Activated CD4-positive, alpha-beta memory T cell treated with anti-CD3 and anti-CD28 coated beads for 36 hours (primary cell): ENCODE measurements at regions of chr2 and their contacts with region 1.

Region 1: DNA sequence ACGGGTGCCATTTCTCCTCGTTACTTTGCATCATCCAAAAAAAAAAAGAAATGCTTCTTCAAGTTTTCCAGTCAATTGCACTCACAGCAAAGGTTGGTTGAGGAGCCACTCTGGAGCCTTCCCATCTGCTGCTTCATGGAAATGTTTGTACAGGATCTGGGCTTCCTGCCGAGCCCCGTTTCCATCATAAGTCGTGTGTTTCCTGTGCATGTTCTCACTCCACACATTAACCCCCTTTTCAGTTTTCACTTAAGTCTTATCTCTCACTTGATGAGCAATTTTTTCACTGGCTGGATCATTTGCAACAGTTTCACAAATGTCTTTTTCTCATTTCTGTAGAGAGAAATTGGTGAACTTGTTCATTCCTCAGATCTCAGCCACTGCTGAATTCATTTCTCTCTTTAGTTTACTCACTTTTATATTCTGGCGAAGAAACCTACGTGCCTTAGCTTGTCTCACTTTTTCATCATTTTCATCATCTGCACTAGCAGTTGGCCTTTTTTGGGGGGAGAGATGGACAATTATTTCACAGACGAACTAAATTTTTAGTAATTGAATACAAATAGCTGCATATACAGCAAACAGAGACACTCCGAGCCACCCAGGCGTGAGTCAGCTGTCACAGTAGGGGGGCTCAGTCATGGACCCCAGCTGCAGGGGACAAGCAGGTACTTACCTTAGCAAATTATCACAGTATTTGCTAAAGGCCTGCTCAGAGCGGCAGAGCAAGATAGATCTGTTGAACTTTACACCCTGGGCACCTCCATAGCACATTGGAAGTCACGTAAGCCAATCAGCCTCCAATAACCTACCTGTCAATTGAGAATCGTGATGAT is 750.8 kb upstream of the ID2 start:
- DNase-seq: peak; percentile 62
- H3K4me3 Mint-ChIP-seq: peak overlapping the region; percentile 1
- H3K27ac Mint-ChIP-seq: peak overlapping the region; percentile 88
- H3K4me1 Mint-ChIP-seq: peaks cover 31% of the 10 kb centered on the region
- H3K27me3 Mint-ChIP-seq: peaks cover 3% of the 10 kb centered on the region

Region 2: GRCh38 chr2:7692657-7693161 is 238.3 kb before region 1 on chr2:
- CTCF ChIA-PET with region 1: no interaction called
- POLR2A ChIA-PET with region 1: no interaction called
- intact Hi-C with region 1: loop called (anchors 10 kb)
- DNase-seq: no peak
- H3K4me3 Mint-ChIP-seq: peak overlapping the region; percentile 6
- H3K27ac Mint-ChIP-seq: no peak overlapping the region
- H3K4me1 Mint-ChIP-seq: peaks cover 37% of the 10 kb centered on the region
- H3K27me3 Mint-ChIP-seq: peaks cover 3% of the 10 kb centered on the region

Region 3: GRCh38 chr2:7773362-7774360 is 157.4 kb before region 1 on chr2:
- CTCF ChIA-PET with region 1: no interaction called
- POLR2A ChIA-PET with region 1: no interaction called
- intact Hi-C with region 1: loop called (anchors 1 kb)
- DNase-seq: peak; percentile 65
- H3K4me3 Mint-ChIP-seq: no peak overlapping the region
- H3K27ac Mint-ChIP-seq: peak overlapping the region; percentile 66
- H3K4me1 Mint-ChIP-seq: peaks cover 33% of the 10 kb centered on the region
- H3K27me3 Mint-ChIP-seq: peaks cover 12% of the 10 kb centered on the region

Region 4: GRCh38 chr2:7857904-7858303 is 73.1 kb before region 1 on chr2:
- CTCF ChIA-PET with region 1: no interaction called
- POLR2A ChIA-PET with region 1: no interaction called
- intact Hi-C with region 1: no loop called
- DNase-seq: no peak
- H3K4me3 Mint-ChIP-seq: no peak overlapping the region
- H3K27ac Mint-ChIP-seq: no peak overlapping the region
- H3K4me1 Mint-ChIP-seq: peaks cover 8% of the 10 kb centered on the region
- H3K27me3 Mint-ChIP-seq: peaks cover 3% of the 10 kb centered on the region

Region 5: DNA sequence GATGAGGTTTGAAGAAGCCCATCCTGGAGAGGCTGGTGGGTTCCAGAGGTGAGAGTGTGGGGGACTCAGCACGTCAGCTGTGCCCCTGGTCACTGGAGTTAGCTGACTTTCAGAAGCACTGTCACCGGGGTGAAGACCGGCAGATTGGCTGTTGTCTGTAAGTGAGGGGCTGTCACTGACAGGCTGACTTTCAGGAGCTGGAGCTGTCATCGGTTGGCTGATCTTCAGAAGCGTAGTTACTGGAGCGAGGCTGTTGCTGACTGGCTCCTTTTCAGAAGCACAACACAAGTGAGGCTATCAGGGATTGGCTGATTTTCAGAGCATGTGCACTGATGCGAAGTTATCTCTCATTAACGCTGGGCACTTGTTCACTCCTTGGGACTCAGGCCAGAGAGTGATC is 12.4 kb after region 1 on chr2:
- CTCF ChIA-PET with region 1: interaction called, 3 read pairs
- POLR2A ChIA-PET with region 1: no interaction called
- intact Hi-C with region 1: loop called (anchors 1 kb)
- DNase-seq: no peak
- H3K4me3 Mint-ChIP-seq: no peak overlapping the region
- H3K27ac Mint-ChIP-seq: no peak overlapping the region
- H3K4me1 Mint-ChIP-seq: peaks cover 21% of the 10 kb centered on the region
- H3K27me3 Mint-ChIP-seq: no peaks in the 10 kb centered on the region

Region 6: GRCh38 chr2:8234757-8235374 is 303.8 kb after region 1 on chr2:
- CTCF ChIA-PET with region 1: no interaction called
- POLR2A ChIA-PET with region 1: no interaction called
- intact Hi-C with region 1: loop called (anchors 5 kb)
- DNase-seq: no peak
- H3K4me3 Mint-ChIP-seq: no peak overlapping the region
- H3K27ac Mint-ChIP-seq: no peak overlapping the region
- H3K4me1 Mint-ChIP-seq: peaks cover 14% of the 10 kb centered on the region
- H3K27me3 Mint-ChIP-seq: no peaks in the 10 kb centered on the region